ENCODE measurements at regions of chr13 and their contacts with region 1.

Region 1: DNA sequence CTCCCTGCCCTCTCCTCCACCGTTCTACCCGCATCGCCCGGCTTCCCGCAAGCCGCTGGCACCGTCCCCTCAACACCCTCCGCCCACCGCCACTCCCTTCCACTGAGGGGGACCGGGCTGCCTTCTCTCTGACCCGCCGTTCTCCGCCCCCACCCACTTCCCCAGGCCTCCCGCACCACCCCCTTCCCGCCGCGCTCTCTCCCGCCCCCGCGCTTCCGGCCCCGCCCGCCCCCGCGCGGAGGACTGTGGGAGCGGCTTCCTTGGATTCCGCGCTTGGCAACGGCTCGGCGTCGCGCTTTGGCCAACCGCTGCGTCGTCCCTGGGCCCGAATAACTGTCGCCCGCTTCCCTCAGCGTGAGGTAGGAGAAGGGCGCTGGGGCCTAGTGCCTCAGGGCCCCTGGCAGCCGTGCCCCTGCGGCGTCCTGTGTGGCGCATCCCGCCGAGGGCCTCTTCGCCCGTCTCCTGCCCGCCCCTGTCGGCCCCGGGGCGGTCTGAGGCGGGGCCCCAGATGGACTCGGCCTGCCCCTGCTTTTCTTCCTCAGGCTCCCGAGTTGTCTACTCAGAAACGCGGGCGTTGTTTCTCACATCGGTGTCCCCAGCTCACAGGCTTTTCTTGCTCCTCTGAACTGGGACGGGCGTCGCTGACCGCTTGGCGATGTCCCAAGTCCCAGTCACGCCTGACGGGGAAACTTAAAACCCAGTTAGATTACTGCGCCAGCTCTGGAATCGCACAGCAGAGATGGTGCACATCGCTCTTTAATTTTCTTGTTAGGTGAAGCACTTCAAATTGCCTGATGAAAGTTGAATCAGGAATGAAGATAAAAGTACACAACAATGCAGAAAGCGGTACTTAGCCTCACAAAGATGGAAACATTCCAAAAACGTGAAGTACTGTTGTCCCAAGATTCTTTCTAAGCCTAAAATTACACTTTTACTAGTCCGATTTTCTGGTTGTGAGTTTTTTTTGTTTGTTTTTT is at the start of gene IFT88:
- DNase-seq: peak; percentile 85
- H3K4me3 ChIP-seq: peak within 1 kb of the TSS; percentile 58 to 59
- H3K27ac ChIP-seq: peak within 1 kb of the TSS; percentile 89 to 91
- H3K4me1 ChIP-seq: peaks cover 3% of the 10 kb centered on the region
- H3K27me3 ChIP-seq: no peaks in the 10 kb centered on the region
- CTCF ChIP-seq: peak in 1 of 4 experiments; percentile 24
- POLR2A ChIP-seq: peak; percentile 28
- total RNA-seq, gene IFT88: 10.8 to 22.0 TPM

Region 2: GRCh38 chr13:20387441-20387971 is 179.7 kb before region 1 on chr13:
- intact Hi-C with region 1: no loop called
- DNase-seq: no peak
- H3K4me3 ChIP-seq: no peak overlapping the region
- H3K27ac ChIP-seq: no peak overlapping the region
- H3K4me1 ChIP-seq: no peaks in the 10 kb centered on the region
- H3K27me3 ChIP-seq: no peaks in the 10 kb centered on the region
- CTCF ChIP-seq: no peak
- POLR2A ChIP-seq: no peak

Region 3: GRCh38 chr13:20425819-20426219 is 141.4 kb before region 1 on chr13:
- intact Hi-C with region 1: no loop called
- DNase-seq: no peak
- H3K4me3 ChIP-seq: no peak overlapping the region
- H3K27ac ChIP-seq: no peak overlapping the region
- H3K4me1 ChIP-seq: no peaks in the 10 kb centered on the region
- H3K27me3 ChIP-seq: no peaks in the 10 kb centered on the region
- CTCF ChIP-seq: no peak
- POLR2A ChIP-seq: no peak

Region 4: GRCh38 chr13:20525690-20526544 is 41.3 kb before region 1 on chr13 and contains the start of gene CRYL1:
- intact Hi-C with region 1: loop called (anchors 2 kb)
- DNase-seq: peak; percentile 71
- H3K4me3 ChIP-seq: peak within 1 kb of the TSS; percentile 94 to 98
- H3K27ac ChIP-seq: peak within 1 kb of the TSS; percentile 79 to 80
- H3K4me1 ChIP-seq: no peaks in the 10 kb centered on the region
- H3K27me3 ChIP-seq: no peaks in the 10 kb centered on the region
- CTCF ChIP-seq: no peak
- POLR2A ChIP-seq: peak; percentile 49
- total RNA-seq, gene CRYL1: 35.3 to 75.5 TPM